Right lobe of liver (tissue), 6 donors: ENCODE measurements at regions of chr15 and their contacts with region 1.

Region 1: GRCh38 chr15:58066042-58066867 is 744 bp upstream of the ALDH1A2 start:
- DNase-seq: peak; percentile 68 to 73 (median 73)
- ATAC-seq: peak; percentile 97 to 98 (median 97)
- H3K4me3 ChIP-seq: peak overlapping the region; percentile 29 to 49 (median 36)
- H3K27ac ChIP-seq: no peak overlapping the region
- H3K4me1 ChIP-seq: peaks cover 0 to 12% (median 4%) of the 10 kb centered on the region in 4 donors
- H3K27me3 ChIP-seq: peaks cover 0 to 17% of the 10 kb centered on the region in 2 donors
- CTCF ChIP-seq: peak; percentile 75 to 95 (median 92)
- POLR2A ChIP-seq: no peak

Region 2: GRCh38 chr15:57732526-57733331 is 333.5 kb before region 1 on chr15:
- intact Hi-C with region 1: loop called in 1 of 2 experiments (anchors 5 kb)
- DNase-seq: peak in 2 of 3 donors; percentile 29 to 63
- ATAC-seq: peak; percentile 83 to 91 (median 90)
- H3K4me3 ChIP-seq: peak overlapping the region in 2 of 3 donors; percentile 13 to 30
- H3K27ac ChIP-seq: no peak overlapping the region
- H3K4me1 ChIP-seq: no peaks in the 10 kb centered on the region
- H3K27me3 ChIP-seq: no peaks in the 10 kb centered on the region
- CTCF ChIP-seq: peak; percentile 76 to 95 (median 90)
- POLR2A ChIP-seq: no peak

Region 3: DNA sequence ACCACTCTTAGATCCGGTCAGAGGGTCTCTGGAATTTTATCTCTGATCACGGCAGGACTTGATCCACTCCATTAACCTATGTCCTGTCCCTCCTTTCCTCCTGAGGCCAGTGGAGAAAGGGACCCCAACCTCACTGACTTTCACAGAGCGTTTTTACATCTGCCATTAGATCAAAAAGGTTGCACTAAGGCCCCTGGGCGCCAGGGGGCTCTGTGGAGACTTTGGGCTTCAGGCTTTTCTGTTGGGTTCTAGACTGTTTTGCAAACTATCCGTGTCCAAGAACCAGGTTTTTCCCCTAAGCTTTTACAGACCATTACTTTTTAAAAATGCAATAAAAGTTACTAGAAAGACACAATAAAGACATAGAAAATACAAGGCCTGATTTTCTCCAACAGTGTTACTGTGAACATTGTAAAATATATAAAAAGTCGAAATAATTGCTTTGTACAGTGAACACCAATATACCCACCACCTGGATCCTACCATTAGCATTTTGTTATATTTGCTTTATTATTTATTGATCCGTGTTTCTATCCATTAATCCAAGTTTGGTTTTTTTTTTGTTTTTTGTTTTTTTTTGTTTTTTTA is 200.0 kb before region 1 on chr15:
- intact Hi-C with region 1: loop called (anchors 5 to 10 kb)
- DNase-seq: peak; percentile 55 to 68 (median 63)
- ATAC-seq: peak; percentile 87 to 91 (median 89)
- H3K4me3 ChIP-seq: no peak overlapping the region
- H3K27ac ChIP-seq: no peak overlapping the region
- H3K4me1 ChIP-seq: no peaks in the 10 kb centered on the region
- H3K27me3 ChIP-seq: no peaks in the 10 kb centered on the region
- CTCF ChIP-seq: peak; percentile 75 to 86 (median 82)
- POLR2A ChIP-seq: no peak

Region 4: GRCh38 chr15:58396181-58396580 is 329.9 kb after region 1 on chr15:
- intact Hi-C with region 1: no loop called
- DNase-seq: no peak
- ATAC-seq: peak in 1 of 4 donors; percentile 11
- H3K4me3 ChIP-seq: no peak overlapping the region
- H3K27ac ChIP-seq: no peak overlapping the region
- H3K4me1 ChIP-seq: peaks cover 0 to 42% (median 8%) of the 10 kb centered on the region in 4 donors
- H3K27me3 ChIP-seq: no peaks in the 10 kb centered on the region
- CTCF ChIP-seq: no peak
- POLR2A ChIP-seq: no peak